ENCODE measurements at regions of chr4 and their contacts with region 1.

Region 1: DNA sequence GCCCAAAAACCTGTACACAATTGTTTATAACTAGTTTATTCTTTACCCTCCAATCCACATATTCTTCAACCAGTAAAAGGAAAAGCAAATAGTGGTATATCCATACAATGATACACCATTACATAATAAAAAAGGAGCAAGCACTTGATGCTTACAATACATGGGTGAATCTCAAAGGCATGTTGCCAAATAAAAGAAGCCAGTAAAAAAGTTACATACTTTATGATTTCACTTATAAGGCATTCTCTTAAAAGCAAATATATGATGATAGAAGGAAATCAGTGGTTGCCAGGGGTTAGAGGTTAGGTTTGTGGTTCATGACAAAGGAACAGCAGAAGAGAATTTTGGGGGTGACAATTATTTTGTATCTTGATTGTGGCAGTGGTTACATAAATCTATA is 896.1 kb upstream of the LCORL start:
- DNase-seq: peak; percentile 65
- ATAC-seq: peak; percentile 64
- H3K4me3 ChIP-seq: no peak overlapping the region
- H3K27ac ChIP-seq: no peak overlapping the region
- H3K4me1 ChIP-seq: no peaks in the 10 kb centered on the region
- H3K27me3 ChIP-seq: no peaks in the 10 kb centered on the region
- CTCF ChIP-seq: no peak

Region 2: DNA sequence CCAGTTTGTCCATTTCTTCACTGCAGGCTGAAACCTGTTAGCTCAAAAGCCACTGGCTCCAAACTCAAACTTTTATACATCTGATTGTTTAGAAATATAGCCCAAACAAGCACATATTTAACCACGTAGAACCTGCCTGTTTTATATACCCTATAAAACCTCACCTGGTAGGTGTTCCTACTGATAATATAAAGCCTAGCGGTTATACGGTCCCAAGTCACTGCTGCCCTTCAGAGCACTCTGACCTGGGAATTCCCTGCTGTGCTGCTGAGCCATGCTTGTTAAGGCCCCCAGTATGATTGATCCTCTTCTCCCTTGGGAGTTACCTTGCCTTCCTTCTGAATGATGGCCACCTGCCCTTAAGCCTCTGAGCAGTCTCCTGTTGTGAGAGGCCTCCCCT is 463.3 kb before region 1 on chr4:
- CTCF ChIA-PET with region 1: no interaction called
- POLR2A ChIA-PET with region 1: no interaction called
- intact Hi-C with region 1: no loop called
- DNase-seq: no peak
- ATAC-seq: no peak
- H3K4me3 ChIP-seq: no peak overlapping the region
- H3K27ac ChIP-seq: no peak overlapping the region
- H3K4me1 ChIP-seq: no peaks in the 10 kb centered on the region
- H3K27me3 ChIP-seq: 0 out of 2 replicates have a peak, but pooled peaks cover 3% of the 10 kb centered on the region
- CTCF ChIP-seq: no peak

Region 3: GRCh38 chr4:18626996-18627395 is 290.7 kb before region 1 on chr4:
- CTCF ChIA-PET with region 1: no interaction called
- POLR2A ChIA-PET with region 1: no interaction called
- intact Hi-C with region 1: no loop called
- DNase-seq: no peak
- ATAC-seq: no peak
- H3K4me3 ChIP-seq: no peak overlapping the region
- H3K27ac ChIP-seq: no peak overlapping the region
- H3K4me1 ChIP-seq: no peaks in the 10 kb centered on the region
- H3K27me3 ChIP-seq: peaks cover 7% of the 10 kb centered on the region; the same call in 1 of the 2 replicates
- CTCF ChIP-seq: no peak

Region 4: DNA sequence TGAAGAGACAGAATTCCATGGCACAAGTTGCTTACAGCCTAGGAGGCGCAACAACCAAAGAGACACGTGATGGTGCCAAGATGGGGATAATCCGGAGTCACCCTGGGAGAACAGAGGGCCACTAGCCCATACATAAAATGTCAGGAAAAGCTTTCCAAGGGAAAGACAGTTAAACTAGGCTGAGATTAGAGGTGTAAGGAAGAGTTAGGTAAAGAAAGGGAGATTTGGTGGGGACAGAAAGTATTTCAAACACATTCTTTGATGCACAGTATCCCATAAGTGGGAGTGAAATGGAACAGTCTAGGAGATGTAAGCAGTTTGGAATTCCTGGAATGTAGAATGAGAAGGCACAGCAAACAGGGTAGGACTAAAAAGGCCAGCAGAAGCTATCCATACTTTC is 35.2 kb before region 1 on chr4:
- CTCF ChIA-PET with region 1: no interaction called
- POLR2A ChIA-PET with region 1: no interaction called
- intact Hi-C with region 1: loop called (anchors 1 kb)
- DNase-seq: peak; percentile 77
- ATAC-seq: peak; percentile 97
- H3K4me3 ChIP-seq: no peak overlapping the region
- H3K27ac ChIP-seq: peak overlapping the region; percentile 71
- H3K4me1 ChIP-seq: peaks cover 10% of the 10 kb centered on the region
- H3K27me3 ChIP-seq: no peaks in the 10 kb centered on the region
- CTCF ChIP-seq: no peak